Gastrocnemius medialis (tissue), 4 donors: ENCODE measurements at regions of chr7 and their contacts with region 1.

Region 1: DNA sequence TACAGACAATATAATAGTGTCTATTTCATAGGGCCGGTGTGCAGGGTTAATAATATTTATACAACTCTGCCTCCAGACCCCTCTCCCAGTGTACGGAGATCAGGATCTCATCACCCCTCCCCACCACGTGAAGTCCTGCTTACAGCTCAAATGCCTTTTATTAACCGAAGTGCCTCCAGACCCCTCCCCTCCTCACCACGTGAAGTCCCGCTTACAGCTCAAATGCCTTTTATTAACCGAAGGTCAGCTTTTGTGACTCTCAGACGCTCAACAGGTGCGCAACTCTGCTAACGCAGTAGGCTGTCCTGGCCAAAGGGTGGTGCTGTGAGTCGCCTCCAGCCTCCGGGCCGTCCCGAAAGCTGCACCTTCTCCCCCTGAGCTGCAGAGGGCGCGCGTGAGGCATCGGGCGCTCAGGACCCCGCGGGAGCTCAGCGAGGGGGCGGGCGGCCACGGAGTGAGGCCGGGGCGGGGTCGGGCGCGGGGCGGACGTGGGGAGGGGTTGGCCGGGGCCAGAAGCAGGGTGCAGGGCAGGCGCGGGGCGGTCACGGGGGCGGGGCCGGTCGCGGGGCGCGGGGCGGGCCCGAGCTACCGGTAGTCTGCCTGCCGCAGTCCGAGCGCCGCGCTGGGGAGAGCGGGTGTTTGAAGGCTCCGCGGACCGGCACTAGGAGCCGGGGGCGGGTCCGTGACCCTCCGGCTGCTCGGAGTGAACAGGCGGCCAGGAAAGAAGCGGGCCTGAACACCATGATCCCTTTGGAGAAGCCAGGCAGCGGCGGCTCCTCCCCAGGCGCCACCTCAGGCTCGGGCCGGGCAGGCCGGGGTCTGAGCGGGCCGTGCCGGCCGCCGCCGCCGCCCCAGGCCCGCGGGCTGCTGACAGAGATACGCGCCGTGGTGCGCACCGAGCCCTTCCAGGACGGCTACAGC is at the start of gene STK17A:
- DNase-seq: peak; percentile 86 to 91
- ATAC-seq: peak; percentile 85 to 88
- H3K4me3 ChIP-seq: peak within 1 kb of the TSS; percentile 73 to 88 (median 74)
- H3K27ac ChIP-seq: peak within 1 kb of the TSS; percentile 81 to 96 (median 94)
- H3K4me1 ChIP-seq: peaks cover 14 to 21% of the 10 kb centered on the region in 2 donors
- H3K27me3 ChIP-seq: no peaks in the 10 kb centered on the region
- CTCF ChIP-seq: peak; percentile 93 to 100 (median 99)
- POLR2A ChIP-seq: peak; percentile 90
- total RNA-seq, gene STK17A: 19.7 to 22.3 (median 21.4) TPM

Region 2: GRCh38 chr7:42931834-42932651 is 650.7 kb before region 1 on chr7 and contains the starts of genes MRPL32 and PSMA2:
- in situ Hi-C with region 1: no loop called
- intact Hi-C with region 1: loop called (anchors 10 kb)
- DNase-seq: peak; percentile 93 to 96
- ATAC-seq: peak; percentile 99 to 100
- H3K4me3 ChIP-seq: peak within 1 kb of the TSS; percentile 65 to 93 (median 87)
- H3K27ac ChIP-seq: peak within 1 kb of the TSS; percentile 88 to 96 (median 90)
- H3K4me1 ChIP-seq: peaks cover 28 to 36% of the 10 kb centered on the region in 2 donors
- H3K27me3 ChIP-seq: no peaks in the 10 kb centered on the region
- CTCF ChIP-seq: no peak
- POLR2A ChIP-seq: peak; percentile 78 to 87
- total RNA-seq, gene MRPL32: 42.6 to 59.2 (median 56.8) TPM
- total RNA-seq, gene PSMA2: 178 to 246 (median 209) TPM

Region 3: GRCh38 chr7:42964849-42965805 is 617.6 kb before region 1 on chr7:
- in situ Hi-C with region 1: no loop called
- intact Hi-C with region 1: no loop called
- DNase-seq: no peak
- ATAC-seq: no peak
- H3K4me3 ChIP-seq: no peak overlapping the region
- H3K27ac ChIP-seq: no peak overlapping the region
- H3K4me1 ChIP-seq: no peaks in the 10 kb centered on the region
- H3K27me3 ChIP-seq: no peaks in the 10 kb centered on the region
- CTCF ChIP-seq: no peak
- POLR2A ChIP-seq: no peak

Region 4: DNA sequence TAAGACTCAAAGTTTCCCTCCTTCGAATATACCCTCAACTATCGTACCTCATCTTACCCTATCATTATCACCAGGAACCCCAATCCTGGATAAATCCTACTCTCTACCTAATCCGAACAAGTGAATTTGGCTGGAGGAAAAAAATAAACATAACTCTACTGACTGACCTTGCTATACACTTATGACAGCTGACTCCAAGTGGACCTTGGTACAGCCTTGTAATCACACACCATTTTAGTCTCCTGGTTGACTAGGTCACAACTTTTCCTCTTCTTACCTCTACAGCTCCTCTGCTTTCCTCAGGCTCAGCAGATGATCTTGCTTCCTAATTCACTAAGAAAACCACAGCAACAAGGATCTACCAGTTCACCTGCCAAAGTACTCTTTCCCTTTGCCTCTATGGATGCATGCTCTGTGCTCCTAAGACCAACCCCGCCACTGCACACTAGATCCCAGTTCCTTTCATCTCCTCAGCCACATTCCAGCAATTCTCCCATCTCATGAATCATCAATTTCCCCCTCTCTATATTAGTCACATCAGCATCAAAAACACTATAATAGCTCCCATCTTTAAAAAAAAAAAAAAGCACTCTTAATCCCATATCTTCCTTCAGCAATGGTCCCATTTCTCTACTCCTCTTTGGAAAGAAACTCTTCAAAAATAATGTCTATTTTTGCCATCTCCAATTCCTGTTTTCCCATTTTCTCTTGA is 111.1 kb after region 1 on chr7:
- in situ Hi-C with region 1: loop called in 2 of 4 experiments (anchors 5 to 10 kb)
- intact Hi-C with region 1: no loop called
- DNase-seq: no peak
- ATAC-seq: no peak
- H3K4me3 ChIP-seq: no peak overlapping the region
- H3K27ac ChIP-seq: no peak overlapping the region
- H3K4me1 ChIP-seq: peaks cover 5 to 16% of the 10 kb centered on the region in 2 donors
- H3K27me3 ChIP-seq: no peaks in the 10 kb centered on the region
- CTCF ChIP-seq: no peak
- POLR2A ChIP-seq: no peak

Region 5: DNA sequence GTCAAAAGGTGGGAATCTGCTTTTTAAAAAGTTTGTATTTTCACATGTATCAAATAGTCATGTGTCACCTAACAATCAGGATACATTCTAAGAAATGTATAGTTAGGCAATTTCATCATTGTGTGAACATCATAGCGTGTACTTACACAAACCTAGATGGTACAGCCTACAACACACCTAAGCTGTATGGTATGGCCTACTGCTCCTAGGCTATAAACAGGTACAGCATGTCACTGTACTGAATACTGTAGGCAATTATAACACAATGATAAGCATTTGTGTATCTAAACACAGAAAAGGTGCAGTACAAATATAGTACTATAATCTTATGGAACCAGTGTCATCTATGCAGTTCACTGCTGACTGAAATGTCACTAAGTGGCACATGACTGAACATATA is 128.7 kb after region 1 on chr7:
- in situ Hi-C with region 1: loop called in 1 of 4 experiments (anchors 5 kb)
- intact Hi-C with region 1: no loop called
- DNase-seq: no peak
- ATAC-seq: no peak
- H3K4me3 ChIP-seq: no peak overlapping the region
- H3K27ac ChIP-seq: no peak overlapping the region
- H3K4me1 ChIP-seq: peaks cover 10 to 11% of the 10 kb centered on the region in 2 donors
- H3K27me3 ChIP-seq: no peaks in the 10 kb centered on the region
- CTCF ChIP-seq: no peak
- POLR2A ChIP-seq: no peak

Region 6: DNA sequence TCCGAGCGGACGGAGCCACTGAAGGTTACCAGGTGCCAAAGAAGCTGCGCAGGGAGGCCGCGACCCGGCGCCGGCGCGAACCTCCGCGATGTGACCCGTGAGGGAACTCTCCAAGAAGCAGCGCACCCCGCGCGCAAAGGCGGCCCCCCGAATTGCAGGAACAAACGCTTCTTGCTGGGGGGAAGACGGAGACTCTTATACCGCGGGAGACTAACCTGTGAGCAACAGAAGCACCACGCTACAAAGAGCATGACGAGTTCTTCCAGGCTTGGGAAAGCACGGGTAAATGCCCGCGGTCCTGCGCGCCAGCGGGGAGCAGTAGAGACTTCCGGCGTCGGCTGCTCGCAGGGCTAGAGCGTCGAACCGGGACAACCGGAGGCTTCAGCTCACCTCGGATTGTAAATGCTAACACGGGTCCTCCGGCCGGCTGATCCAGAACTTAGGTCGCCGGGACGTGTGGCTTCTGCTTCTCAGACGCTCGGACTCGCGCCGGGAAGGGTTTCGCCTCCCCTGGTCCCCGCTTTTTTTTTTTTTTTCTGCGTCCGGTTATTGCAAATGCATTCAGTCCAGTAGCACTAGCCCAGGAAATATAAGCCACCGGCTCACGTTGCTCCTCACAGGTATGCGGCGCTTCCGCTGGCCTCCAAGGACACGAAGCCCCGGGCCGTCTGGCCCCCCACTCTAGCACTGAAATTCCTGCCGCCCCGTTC is 146.6 kb after region 1 on chr7 and contains the start of gene COA1:
- in situ Hi-C with region 1: no loop called
- intact Hi-C with region 1: loop called (anchors 2 kb)
- DNase-seq: peak; percentile 79 to 90
- ATAC-seq: peak; percentile 96 to 97
- H3K4me3 ChIP-seq: peak within 1 kb of the TSS; percentile 62 to 84 (median 73)
- H3K27ac ChIP-seq: peak within 1 kb of the TSS; percentile 80 to 94 (median 93)
- H3K4me1 ChIP-seq: peaks cover 35 to 36% of the 10 kb centered on the region in 2 donors
- H3K27me3 ChIP-seq: no peaks in the 10 kb centered on the region
- CTCF ChIP-seq: no peak
- POLR2A ChIP-seq: peak; percentile 54 to 65
- total RNA-seq, gene COA1: 34.9 to 55.2 (median 49.3) TPM

Region 7: GRCh38 chr7:44163591-44163990 is 580.8 kb after region 1 on chr7:
- in situ Hi-C with region 1: no loop called
- intact Hi-C with region 1: no loop called
- DNase-seq: no peak
- ATAC-seq: no peak
- H3K4me3 ChIP-seq: no peak overlapping the region
- H3K27ac ChIP-seq: no peak overlapping the region
- H3K4me1 ChIP-seq: peaks cover 10 to 11% of the 10 kb centered on the region in 2 donors
- H3K27me3 ChIP-seq: no peaks in the 10 kb centered on the region
- CTCF ChIP-seq: no peak
- POLR2A ChIP-seq: no peak